Right lobe of liver (tissue), 6 donors: ENCODE measurements at regions of chr3 and their contacts with region 1.

Region 1: GRCh38 chr3:156691920-156692319 is 17.5 kb downstream of the TIPARP start:
- DNase-seq: no peak
- ATAC-seq: peak in 1 of 4 donors; percentile 12
- H3K4me3 ChIP-seq: no peak overlapping the region
- H3K27ac ChIP-seq: no peak overlapping the region
- H3K4me1 ChIP-seq: peaks cover 0 to 29% (median 6%) of the 10 kb centered on the region in 4 donors
- H3K27me3 ChIP-seq: no peaks in the 10 kb centered on the region
- CTCF ChIP-seq: no peak
- POLR2A ChIP-seq: no peak

Region 2: DNA sequence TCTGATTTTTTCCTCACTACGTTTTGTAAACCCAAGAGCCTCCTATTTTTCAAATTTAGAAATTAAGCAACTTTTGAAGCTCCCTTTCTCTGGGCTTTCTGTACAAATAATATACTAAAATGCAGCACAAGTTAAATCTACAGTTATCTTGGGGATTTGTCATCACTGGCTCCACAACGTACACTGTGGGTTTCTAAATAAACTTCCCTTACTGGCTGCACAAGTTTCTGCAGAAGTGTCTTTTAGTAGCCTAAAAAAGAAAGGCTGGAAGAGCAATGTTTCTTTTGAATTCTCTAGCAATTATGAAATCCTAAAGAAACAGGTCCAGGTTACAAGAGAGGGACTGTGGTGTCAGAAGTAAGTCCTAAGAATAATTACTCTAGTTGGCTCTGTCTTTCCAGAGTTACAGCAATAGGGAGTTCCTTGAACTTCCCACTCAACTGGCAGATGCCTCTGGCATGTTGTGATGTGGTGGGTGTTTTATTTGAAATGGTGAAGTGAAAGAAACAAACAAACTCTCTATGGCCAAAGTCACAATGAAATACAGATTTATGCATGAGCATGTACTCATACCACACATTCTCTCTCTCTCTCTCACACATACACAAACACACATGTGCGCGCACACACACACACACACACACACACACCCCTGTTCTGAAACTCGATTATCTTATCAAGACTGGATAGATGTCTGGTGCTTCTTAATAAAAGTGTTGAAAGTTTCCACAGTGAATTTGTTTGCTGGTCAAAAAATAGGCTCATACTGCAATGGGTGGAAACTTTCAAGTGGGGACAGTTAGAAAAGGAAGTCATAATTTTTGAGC is 335.2 kb before region 1 on chr3:
- intact Hi-C with region 1: no loop called
- DNase-seq: no peak
- ATAC-seq: peak in 1 of 4 donors; percentile 14
- H3K4me3 ChIP-seq: no peak overlapping the region
- H3K27ac ChIP-seq: no peak overlapping the region
- H3K4me1 ChIP-seq: no peaks in the 10 kb centered on the region
- H3K27me3 ChIP-seq: no peaks in the 10 kb centered on the region
- CTCF ChIP-seq: no peak
- POLR2A ChIP-seq: no peak

Region 3: DNA sequence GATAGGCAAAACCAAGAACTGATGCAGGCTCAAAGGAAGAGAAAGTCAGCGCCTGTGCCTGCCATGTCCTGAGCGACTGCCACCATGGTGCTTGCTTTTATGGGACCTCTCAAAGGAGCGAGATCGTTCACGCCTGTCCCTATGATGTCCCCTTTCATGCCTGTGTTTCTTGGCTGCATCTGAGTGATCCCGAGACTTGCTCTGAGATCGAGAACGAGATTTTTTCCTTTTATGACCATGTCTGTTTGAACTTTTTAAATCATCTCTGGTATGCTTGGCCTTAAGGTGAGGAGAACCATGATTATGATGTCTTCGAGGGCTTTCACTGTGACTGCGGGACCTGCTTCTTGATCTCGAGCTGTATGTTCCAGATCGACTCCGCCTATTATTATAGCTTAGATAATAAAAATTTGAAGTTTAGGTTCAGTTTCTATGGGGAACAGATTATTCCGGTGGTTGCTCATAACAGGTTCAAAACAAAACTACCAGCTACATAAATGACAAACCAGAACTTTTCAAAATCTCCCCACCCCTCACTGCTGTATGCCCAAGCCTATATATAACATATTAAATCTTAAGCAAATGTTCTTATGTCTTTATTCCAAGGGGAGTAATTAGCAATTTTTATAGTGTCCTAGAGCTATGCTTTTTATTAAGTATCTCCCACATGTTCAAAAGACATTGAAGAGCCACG is 456.4 kb after region 1 on chr3:
- intact Hi-C with region 1: loop called in 1 of 2 experiments (anchors 10 kb)
- DNase-seq: no peak
- ATAC-seq: peak; percentile 23 to 44 (median 29)
- H3K4me3 ChIP-seq: no peak overlapping the region
- H3K27ac ChIP-seq: no peak overlapping the region
- H3K4me1 ChIP-seq: no peaks in the 10 kb centered on the region
- H3K27me3 ChIP-seq: no peaks in the 10 kb centered on the region
- CTCF ChIP-seq: no peak
- POLR2A ChIP-seq: peak; percentile 8